Activated CD4-positive, alpha-beta memory T cell treated with anti-CD3 and anti-CD28 coated beads, Interleukin-2, amount 10 ng/mL, durations not matched to agents 7 days and 5 days (primary cell): ENCODE measurements at regions of chr14 and their contacts with region 1.

Region 1: DNA sequence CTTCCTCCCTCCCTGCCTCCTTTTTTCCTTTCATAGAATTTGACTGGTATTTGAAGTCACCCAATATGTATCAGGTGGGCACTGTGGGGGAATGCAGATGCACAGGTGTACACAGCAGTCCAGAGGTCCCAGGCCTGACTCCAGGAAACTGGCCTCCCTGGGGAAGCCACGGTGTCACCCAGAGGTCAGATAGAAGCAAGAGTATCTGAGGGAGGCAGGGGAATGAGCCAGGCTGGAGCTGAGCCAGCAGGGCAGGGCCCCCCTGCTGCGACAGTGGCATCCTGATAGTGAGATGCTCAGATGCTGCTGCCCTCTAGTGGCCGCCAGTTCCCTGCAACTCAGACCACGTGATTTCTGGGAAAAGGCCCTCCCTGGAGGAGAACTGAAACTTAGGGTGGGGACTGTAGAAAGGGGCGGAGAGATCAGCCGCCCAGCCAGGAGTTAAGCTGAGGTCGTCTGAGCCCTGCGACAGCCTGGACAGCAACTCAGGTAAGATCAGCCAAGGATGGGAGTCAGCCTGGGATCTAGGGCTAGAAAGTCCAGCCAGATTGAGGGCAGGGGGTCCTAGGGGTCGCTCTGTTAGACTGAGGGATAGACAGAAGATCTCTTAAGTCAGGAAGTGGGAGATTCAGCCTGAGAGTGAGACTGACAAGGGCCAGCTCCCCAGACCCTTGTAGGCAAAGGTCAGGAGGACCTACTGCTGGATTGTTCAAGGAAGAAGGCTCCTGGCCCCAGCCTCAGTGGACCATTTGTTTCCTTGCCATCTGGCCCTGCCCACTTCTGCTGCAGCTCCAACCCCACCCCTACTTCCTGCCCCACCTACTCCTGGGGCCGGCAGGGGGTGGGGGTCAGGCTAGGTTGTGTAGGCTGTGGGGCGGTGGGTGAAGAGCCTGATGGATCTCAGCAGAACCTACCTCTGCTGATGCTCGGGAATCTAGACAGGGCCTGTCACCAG is at the start of gene IRF9:
- DNase-seq: peak; percentile 99
- H3K4me3 Mint-ChIP-seq: peak within 1 kb of the TSS; percentile 100
- H3K27ac Mint-ChIP-seq: peak within 1 kb of the TSS; percentile 100
- H3K4me1 Mint-ChIP-seq: peaks cover 56% of the 10 kb centered on the region
- H3K27me3 Mint-ChIP-seq: no peaks in the 10 kb centered on the region
- total RNA-seq, gene IRF9: 262 to 267 TPM

Region 2: DNA sequence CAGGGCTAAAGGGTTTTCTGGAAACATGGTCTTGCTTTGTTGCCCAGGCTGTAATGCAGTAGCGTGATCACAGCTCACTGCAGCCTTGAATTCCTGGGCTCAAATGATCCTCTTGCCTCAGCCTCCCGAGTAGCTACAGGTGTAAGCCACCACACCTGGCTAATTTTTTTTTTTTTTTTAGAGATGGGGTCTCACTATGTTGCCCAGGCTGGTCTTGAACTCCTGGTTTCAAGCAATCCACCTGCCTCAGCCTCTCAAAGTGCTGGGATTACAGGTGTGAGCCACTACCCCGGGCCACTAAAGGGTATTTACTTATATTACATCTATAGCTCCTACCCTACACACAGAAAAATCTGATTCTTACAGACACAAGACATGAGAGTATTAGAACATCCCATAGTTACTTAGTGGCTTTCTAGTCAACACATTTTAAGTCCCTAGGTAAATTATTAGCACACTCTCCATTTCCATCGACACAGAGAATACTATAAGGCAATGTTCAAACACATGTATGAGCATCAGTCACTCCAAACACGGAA is 52.7 kb before region 1 on chr14:
- CTCF ChIA-PET with region 1: interaction called, 35 read pairs
- POLR2A ChIA-PET with region 1: interaction called, 121 read pairs
- DNase-seq: no peak
- H3K4me3 Mint-ChIP-seq: peak overlapping the region; percentile 8
- H3K27ac Mint-ChIP-seq: peak overlapping the region; percentile 98
- H3K4me1 Mint-ChIP-seq: peaks cover 43% of the 10 kb centered on the region
- H3K27me3 Mint-ChIP-seq: no peaks in the 10 kb centered on the region

Region 3: DNA sequence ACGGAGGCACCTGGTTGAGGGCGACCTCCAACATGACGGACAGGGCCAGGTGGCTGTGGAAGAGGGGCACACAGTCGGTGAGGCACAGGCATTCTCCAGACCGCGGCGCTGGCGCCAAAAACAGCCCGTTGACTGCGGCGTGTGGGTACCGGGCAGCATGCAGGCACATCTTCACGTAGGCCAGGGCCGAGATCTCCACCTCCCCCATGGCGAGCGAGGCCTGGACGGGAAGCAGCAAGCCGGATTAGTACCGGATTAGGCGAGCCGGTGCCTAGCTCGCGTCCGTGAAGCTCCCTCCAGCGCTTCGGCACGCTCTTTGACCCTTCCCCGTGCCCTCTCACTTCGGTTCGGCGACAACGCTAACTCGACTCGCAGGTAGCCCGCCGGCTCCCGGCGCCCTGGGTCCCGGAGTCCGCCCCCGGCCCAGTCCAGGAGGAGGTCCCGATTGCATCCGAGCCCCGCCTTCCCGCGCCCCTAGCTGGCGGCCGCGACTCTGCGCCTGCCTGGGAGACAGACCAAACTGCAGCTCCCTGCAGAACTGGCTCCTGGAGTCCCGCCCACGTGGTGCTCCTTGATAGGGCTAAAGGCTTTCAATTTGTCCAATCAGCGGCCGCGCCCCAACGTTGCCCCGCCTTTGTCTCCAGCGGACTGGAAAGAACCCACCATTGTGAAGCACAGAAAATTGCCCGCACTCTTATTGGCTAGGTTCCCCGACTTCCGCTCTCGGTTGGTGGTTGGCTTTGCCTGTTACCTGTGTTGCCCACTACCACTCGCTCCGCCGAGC is 19.8 kb before region 1 on chr14 and contains the start of gene EMC9:
- CTCF ChIA-PET with region 1: interaction called, 76 read pairs
- POLR2A ChIA-PET with region 1: interaction called, 652 read pairs
- DNase-seq: peak; percentile 100
- H3K4me3 Mint-ChIP-seq: peak within 1 kb of the TSS; percentile 93
- H3K27ac Mint-ChIP-seq: peak within 1 kb of the TSS; percentile 92
- H3K4me1 Mint-ChIP-seq: peaks cover 73% of the 10 kb centered on the region
- H3K27me3 Mint-ChIP-seq: no peaks in the 10 kb centered on the region
- total RNA-seq, gene EMC9: 45.0 to 51.7 TPM

Region 4: DNA sequence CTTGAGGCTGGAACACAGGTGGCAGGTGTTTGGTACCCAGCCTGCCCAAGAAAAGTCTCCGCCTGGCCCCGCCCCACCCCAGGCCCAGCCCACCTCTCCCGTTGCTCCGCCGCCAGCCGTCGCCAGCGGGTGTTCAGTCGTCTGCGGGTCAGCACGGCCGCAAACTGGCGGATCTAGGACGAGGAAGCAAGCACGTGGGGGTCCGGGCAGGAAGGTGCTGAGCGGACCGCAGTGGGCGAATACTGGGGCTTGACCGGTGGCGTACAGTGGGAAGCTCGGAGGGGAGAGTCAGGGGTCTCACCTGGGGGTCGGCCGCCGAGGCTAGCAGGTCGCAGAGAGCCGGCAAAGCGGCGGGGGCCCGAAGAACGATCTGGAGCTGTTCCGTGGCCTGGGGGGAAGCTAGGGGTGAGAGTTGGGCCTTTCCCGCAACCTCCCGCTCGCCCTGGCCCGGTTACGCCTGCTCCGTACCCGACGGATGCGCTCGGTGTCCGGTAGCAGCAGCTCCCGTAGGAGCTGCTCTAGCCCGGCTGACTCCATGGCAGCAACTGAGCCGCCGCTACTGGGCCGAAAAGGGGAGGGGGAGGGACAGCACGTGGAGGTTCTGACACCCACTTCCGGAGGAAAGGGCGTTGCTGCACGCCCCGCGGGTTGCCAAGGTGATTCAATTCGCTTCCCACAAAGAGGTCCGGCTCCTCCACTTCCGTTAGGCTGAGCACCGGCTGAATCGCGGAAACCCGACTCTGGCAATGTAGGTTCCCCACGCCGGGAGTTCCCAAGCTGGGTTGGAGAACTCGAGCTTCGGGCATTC is 27.3 kb after region 1 on chr14 and contains the start of gene IPO4:
- CTCF ChIA-PET with region 1: interaction called, 11 read pairs
- POLR2A ChIA-PET with region 1: interaction called, 456 read pairs
- DNase-seq: peak; percentile 96
- H3K4me3 Mint-ChIP-seq: peak within 1 kb of the TSS; percentile 81
- H3K27ac Mint-ChIP-seq: peak within 1 kb of the TSS; percentile 79
- H3K4me1 Mint-ChIP-seq: peaks cover 59% of the 10 kb centered on the region
- H3K27me3 Mint-ChIP-seq: no peaks in the 10 kb centered on the region
- total RNA-seq, gene IPO4: 24.0 to 26.2 TPM

Region 5: DNA sequence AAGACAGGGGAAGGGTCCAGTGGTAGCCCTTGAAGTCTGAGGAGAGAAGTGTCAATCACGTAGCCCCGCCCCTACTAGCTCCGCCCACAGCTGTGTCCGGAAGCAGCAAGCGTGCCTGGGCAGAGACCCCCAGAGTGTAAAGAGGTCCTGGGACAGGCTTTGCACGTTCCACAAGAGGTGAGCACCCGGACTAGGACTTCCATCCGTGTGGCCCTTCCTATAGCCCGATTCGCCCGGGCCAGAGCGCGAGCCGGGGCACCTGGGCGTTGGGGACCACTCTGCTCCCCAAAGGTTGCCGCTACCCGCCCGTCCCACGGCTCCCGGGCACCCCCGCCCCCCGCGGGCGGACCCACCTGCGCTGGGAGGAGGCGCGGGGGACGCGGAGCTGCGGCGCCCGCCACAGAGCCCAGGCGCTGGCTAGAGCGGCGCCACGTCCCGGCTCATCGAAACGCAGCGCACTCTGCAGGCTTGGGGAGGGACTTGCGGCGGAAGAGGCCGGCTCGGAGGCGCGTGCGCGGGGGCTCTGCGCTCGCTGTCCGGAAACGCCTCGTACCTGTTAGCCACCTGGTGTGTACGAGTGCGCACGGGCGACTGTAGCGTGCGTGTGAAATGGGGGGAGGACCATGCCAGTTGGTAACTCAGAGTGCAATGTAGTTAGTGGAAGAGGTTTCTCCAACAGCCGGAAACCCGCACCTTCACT is 110.2 kb after region 1 on chr14 and contains the start of gene RABGGTA:
- CTCF ChIA-PET with region 1: interaction called, 4 read pairs
- POLR2A ChIA-PET with region 1: interaction called, 14 read pairs
- DNase-seq: peak; percentile 90
- H3K4me3 Mint-ChIP-seq: peak within 1 kb of the TSS; percentile 86
- H3K27ac Mint-ChIP-seq: peak within 1 kb of the TSS; percentile 92
- H3K4me1 Mint-ChIP-seq: peaks cover 43% of the 10 kb centered on the region
- H3K27me3 Mint-ChIP-seq: no peaks in the 10 kb centered on the region
- total RNA-seq, gene RABGGTA: 40.2 to 41.0 TPM

Region 6: GRCh38 chr14:24456980-24457379 is 295.9 kb after region 1 on chr14:
- CTCF ChIA-PET with region 1: no interaction called
- POLR2A ChIA-PET with region 1: no interaction called
- DNase-seq: no peak
- H3K4me3 Mint-ChIP-seq: no peak overlapping the region
- H3K27ac Mint-ChIP-seq: no peak overlapping the region
- H3K4me1 Mint-ChIP-seq: peaks cover 9% of the 10 kb centered on the region
- H3K27me3 Mint-ChIP-seq: no peaks in the 10 kb centered on the region